Activated B cell treated with CpG ODN at 0.5 μM for 24 hours (primary cell): ENCODE measurements at regions of chr16 and their contacts with region 1.

Region 1: DNA sequence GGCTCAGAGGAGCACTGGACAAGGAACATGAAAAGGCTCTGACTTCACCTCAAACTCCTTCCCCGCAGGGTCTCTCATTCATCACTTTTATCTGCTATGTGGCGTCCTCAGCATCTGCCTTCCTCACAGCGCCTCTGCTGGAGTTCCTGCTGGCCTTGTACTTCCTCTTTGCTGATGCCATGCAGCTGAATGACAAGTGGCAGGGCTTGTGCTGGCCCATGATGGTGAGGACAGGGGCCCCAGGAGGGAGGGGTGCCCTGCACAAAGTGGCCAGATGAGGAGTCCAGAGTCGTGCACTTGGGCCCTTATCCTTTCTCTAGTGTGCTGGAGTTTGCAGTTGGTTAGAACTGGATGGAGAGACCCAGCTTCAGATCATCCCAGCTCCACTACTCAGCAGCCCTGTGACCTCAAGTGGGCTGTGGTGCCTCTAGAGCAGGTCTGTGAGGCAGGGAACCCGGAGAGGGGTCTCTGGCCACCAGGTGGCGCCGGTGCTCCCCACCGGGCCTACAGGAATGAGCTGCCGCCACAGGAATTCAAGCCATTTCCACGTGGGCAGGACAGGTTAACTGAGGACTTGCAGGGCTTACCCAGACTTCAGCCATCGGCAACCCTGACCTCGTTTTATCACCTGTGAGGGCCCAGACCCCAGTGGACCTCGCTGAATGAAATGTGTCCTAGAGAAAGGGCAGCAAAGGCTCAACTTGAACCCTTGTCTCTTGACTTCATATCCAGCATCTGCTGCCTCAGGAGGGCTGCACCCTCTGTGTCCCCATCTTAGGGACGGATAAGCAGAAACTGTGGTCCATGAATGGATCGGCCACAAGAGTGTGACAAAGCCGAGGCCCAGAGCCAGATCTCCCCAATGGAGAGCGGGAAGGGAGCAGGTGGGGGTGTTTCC is 4.0 kb downstream of the CMTM3 start:
- DNase-seq: peak; percentile 69
- ATAC-seq: peak; percentile 26
- H3K4me3 Mint-ChIP-seq: no peak overlapping the region
- H3K27ac Mint-ChIP-seq: no peak overlapping the region
- H3K4me1 Mint-ChIP-seq: peaks cover 36% of the 10 kb centered on the region
- H3K27me3 Mint-ChIP-seq: peaks cover 14% of the 10 kb centered on the region
- CTCF ChIP-seq: no peak

Region 2: GRCh38 chr16:66376559-66377305 is 231.8 kb before region 1 on chr16:
- CTCF ChIA-PET with region 1: no interaction called
- POLR2A ChIA-PET with region 1: no interaction called
- intact Hi-C with region 1: no loop called
- DNase-seq: no peak
- ATAC-seq: no peak
- H3K4me3 Mint-ChIP-seq: no peak overlapping the region
- H3K27ac Mint-ChIP-seq: no peak overlapping the region
- H3K4me1 Mint-ChIP-seq: no peaks in the 10 kb centered on the region
- H3K27me3 Mint-ChIP-seq: peaks cover 4% of the 10 kb centered on the region
- CTCF ChIP-seq: no peak

Region 3: DNA sequence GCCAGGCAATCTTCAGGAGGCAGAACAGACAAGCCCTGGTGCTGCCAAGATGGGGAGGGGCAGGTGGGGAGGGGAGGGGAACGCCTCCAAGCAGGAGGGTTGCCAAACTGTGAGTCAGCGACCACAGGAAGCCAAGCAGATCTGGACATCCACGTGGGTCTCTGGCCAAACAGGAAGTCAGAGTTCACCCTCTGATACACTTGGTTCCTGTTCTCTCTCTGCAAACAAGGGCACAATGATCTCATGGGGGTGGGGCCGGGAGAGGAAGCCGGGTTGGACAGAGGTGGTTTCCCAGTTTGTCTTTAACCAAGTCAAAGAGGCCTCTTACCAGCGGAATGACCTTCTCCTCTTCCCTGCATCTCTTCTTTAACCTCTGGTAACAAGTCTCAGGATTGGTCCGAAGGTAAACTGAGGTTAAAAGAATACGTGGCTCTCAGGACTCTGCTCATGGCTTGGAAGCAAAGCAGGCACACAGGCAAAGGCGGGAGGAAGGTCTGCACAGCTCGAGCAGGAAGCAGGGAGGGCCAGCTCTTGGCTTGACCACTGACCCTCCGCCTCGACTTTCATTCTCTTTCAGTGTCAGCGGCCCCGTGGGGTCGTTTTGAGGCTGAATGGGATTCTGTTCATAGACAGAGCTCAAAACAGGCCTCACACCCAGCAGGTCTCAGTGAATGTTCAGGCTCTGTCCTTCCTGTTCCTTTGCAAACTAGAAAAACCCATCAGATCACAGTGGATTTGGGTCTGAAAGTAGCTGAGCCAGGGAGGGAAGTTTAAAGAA is 91.5 kb before region 1 on chr16:
- CTCF ChIA-PET with region 1: interaction called, 4 read pairs
- POLR2A ChIA-PET with region 1: interaction called, 4 read pairs
- intact Hi-C with region 1: loop called (anchors 1 kb)
- DNase-seq: peak; percentile 72
- ATAC-seq: peak; percentile 91
- H3K4me3 Mint-ChIP-seq: peak overlapping the region; percentile 90
- H3K27ac Mint-ChIP-seq: peak overlapping the region; percentile 99
- H3K4me1 Mint-ChIP-seq: peaks cover 66% of the 10 kb centered on the region
- H3K27me3 Mint-ChIP-seq: no peaks in the 10 kb centered on the region
- CTCF ChIP-seq: no peak

Region 4: DNA sequence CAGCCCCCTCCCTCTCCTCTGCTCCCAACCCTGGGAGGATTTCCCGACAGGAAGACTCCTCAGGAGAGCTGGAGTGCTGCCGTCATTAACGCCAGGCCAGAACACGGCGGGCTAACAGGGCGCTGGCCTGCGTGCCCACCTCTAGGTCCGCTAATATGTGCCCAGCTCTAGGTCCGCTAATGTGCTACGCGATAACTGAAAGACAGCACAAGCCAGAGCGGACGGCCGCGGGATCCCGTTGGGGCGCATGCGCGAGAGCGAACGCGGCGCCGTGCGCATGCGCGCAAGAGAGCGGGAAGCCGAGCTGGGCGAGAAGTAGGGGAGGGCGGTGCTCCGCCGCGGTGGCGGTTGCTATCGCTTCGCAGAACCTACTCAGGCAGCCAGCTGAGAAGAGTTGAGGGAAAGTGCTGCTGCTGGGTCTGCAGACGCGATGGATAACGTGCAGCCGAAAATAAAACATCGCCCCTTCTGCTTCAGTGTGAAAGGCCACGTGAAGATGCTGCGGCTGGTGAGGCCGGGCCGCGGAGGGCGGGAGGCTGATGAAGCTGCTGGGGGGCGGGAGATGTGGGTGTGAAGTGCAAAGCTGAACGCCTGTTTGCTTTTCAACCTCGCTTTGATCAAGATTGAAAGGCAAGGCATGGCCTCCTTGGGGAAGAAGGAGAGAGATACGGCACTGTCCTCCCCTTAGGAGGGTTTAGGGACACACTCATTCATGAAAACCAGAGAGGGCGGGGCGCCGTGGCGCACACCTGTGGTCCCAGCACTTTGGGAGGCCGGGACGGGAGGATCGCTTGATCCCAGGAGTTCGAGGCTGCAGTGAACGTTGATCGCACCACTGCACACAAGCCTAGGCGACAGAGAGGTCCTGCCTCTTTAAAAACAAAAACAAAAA is 56.0 kb before region 1 on chr16 and contains the start of gene CKLF:
- CTCF ChIA-PET with region 1: interaction called, 3 read pairs
- POLR2A ChIA-PET with region 1: interaction called, 19 read pairs
- intact Hi-C with region 1: no loop called
- DNase-seq: peak; percentile 93
- ATAC-seq: peak; percentile 66
- H3K4me3 Mint-ChIP-seq: peak within 1 kb of the TSS; percentile 96
- H3K27ac Mint-ChIP-seq: peak within 1 kb of the TSS; percentile 92
- H3K4me1 Mint-ChIP-seq: peaks cover 74% of the 10 kb centered on the region
- H3K27me3 Mint-ChIP-seq: no peaks in the 10 kb centered on the region
- CTCF ChIP-seq: no peak
- total RNA-seq, gene CKLF: 12.1 and 20.0 TPM in 2 replicates

Region 5: GRCh38 chr16:66588981-66589713 is 19.3 kb before region 1 on chr16:
- CTCF ChIA-PET with region 1: no interaction called
- POLR2A ChIA-PET with region 1: interaction called, 8 read pairs
- intact Hi-C with region 1: loop called (anchors 1 kb)
- DNase-seq: no peak
- ATAC-seq: peak; percentile 87
- H3K4me3 Mint-ChIP-seq: peak overlapping the region; percentile 13
- H3K27ac Mint-ChIP-seq: no peak overlapping the region
- H3K4me1 Mint-ChIP-seq: peaks cover 34% of the 10 kb centered on the region
- H3K27me3 Mint-ChIP-seq: peaks cover 20% of the 10 kb centered on the region
- CTCF ChIP-seq: no peak

Region 6: DNA sequence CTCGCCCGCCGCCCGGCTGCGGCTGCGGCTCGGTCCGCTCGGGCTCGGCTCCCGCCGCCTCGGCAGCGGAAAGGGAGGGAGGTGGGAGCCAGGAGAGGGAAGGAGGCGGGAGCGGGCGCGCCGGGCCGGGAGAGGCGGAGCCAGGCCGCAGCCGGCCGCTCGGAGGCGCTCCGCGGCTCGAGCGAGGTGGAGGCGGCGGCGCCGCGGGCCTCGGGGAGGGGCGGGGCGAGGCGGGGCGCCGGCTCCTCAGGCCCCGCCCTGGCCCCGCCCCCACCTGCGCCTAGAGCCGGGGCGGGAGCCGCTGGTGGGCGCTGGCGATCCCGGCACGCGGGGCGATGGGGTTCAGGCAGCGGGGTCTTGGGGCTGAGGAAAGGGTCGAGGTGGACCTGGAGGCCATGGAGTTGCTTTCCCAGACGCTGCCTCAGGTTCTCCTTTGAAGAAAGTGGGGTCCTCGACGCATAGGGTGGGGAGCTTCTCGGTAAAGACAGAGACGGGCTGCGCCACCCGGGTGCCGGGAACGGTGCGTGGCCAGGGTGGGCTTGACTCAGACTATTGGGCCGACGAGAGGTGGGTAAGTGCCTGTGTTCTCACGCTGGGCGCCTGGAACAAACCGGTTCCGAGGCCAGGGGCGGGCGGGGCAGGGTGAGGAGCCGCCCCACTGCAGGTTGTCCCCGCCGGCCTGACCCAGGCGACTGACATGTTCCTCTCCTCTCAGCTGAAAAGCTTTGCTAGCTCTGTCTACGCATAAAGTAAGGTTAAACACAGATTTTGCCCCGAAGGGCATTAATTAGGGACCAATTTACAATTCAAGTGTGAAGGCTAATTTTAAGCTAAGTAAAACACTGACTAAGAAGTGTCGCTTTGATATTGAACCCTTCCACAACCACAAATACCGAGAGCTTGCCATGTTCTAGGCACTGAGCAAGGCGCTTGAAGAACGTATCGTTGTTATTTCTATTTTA is 88.5 kb after region 1 on chr16 and contains the start of gene CMTM4:
- CTCF ChIA-PET with region 1: interaction called, 3 read pairs
- POLR2A ChIA-PET with region 1: no interaction called
- intact Hi-C with region 1: loop called (anchors 1 kb)
- DNase-seq: peak; percentile 76
- ATAC-seq: peak; percentile 96
- H3K4me3 Mint-ChIP-seq: peak within 1 kb of the TSS; percentile 80
- H3K27ac Mint-ChIP-seq: no peak within 1 kb of the TSS
- H3K4me1 Mint-ChIP-seq: peaks cover 15% of the 10 kb centered on the region
- H3K27me3 Mint-ChIP-seq: peaks cover 16% of the 10 kb centered on the region
- CTCF ChIP-seq: no peak
- total RNA-seq, gene CMTM4: 0.29 and 0.38 TPM in 2 replicates

Region 7: DNA sequence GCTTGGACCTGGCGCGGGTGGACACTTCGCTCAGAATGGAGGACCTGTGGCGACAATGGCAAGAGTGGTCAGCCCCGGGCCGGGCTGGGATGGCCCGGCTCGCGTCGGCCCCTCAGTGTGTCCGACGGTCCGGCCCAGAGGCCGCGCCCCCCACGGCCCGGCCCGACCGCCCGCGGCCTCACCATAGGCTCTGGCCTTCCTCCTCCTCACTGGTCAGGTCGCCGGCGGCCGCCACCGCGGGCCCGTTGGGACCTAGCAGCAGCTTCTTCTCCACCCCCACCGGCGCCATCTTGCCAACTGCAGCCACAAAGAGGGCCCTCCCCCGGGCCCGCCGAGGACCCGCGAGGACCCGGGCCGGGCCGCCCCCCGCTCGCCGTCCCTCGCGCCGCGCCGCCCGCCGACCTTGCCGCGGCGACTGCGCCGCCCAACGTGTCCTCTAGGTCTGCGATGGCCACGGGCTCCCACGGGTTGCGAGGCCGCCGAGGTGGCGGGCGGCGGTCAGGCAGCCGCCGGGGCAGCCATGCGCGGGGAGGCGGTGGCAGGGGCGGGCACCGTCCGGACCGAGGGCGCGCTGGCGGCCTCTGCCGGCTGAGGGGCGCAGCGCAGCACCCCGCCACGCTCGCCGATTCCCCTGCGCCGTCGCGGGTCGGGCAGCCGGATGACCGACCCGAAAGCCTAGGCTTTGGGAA is 143.0 kb after region 1 on chr16 and contains the start of gene DYNC1LI2:
- CTCF ChIA-PET with region 1: no interaction called
- POLR2A ChIA-PET with region 1: no interaction called
- intact Hi-C with region 1: loop called (anchors 2 kb)
- DNase-seq: peak; percentile 92
- ATAC-seq: peak; percentile 96
- H3K4me3 Mint-ChIP-seq: peak within 1 kb of the TSS; percentile 88
- H3K27ac Mint-ChIP-seq: peak within 1 kb of the TSS; percentile 87
- H3K4me1 Mint-ChIP-seq: peaks cover 34% of the 10 kb centered on the region
- H3K27me3 Mint-ChIP-seq: peaks cover 7% of the 10 kb centered on the region
- CTCF ChIP-seq: no peak
- total RNA-seq, gene DYNC1LI2: 64.3 and 84.4 TPM in 2 replicates